HepG2 (cell line): ENCODE measurements at regions of chr3 and their contacts with region 1.

Region 1: DNA sequence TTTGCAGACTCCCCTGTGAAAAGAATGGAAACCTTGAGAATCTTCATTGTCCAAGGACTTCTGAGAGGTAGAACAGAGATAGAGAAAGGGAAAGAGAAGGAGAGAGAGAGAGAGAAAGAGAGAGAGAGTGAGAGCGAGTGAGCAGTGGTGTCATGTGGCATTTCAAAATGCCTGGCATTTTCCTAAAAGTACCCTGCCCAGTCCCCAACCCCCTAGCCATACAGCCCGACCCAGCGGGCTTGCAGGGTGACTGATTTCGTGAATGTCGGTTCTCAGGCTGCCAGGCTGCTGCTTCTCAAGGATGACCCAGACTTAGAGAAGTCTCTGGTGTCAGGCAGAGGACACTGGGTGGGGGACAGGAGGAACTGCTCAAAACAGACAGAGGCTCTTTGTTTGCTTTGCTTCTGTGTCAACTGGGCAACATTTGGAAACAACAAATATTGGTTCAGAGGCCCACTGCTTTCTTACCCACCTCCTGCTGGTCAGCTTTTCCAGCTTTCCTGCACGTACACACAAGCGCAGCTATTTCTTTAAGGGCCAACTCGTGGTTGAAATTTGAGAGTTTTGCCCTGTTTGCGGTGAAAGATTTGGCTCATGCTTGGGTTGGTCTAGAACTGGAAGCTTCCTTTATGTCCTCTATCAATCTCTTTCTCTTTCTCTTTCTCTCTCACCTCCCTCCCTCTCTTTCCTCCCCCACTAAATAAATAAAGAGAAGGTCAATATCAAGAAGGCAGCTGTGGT is 3.7 kb upstream of the TF start:
- DNase-seq: peak; percentile 97
- ATAC-seq: peak; percentile 78
- H3K4me3 ChIP-seq: peak overlapping the region; percentile 29 to 65 (median 48); a peak in 5 of 6 replicates
- H3K27ac ChIP-seq: peak overlapping the region; percentile 90
- H3K4me1 ChIP-seq: peaks cover 55% of the 10 kb centered on the region
- H3K27me3 ChIP-seq: peaks cover 0 to 3% of the 10 kb centered on the region in 2 experiments; a peak in 1 of 5 replicates
- CTCF ChIP-seq: peak; percentile 30
- EP300 ChIP-seq: peak; percentile 87 to 100; a peak in 3 of 4 replicates
- POLR2A ChIP-seq: no peak
- RAD21 ChIP-seq: peak; percentile 80

Region 2: GRCh38 chr3:133670525-133670995 is 72.0 kb before region 1 on chr3:
- CTCF ChIA-PET with region 1: no interaction called
- POLR2A ChIA-PET with region 1: interaction called, 91 read pairs
- in situ Hi-C with region 1: no loop called
- intact Hi-C with region 1: loop called (anchors 1 kb)
- DNase-seq: peak; percentile 98
- ATAC-seq: peak; percentile 91
- H3K4me3 ChIP-seq: peak overlapping the region in 2 of 3 experiments; percentile 5 to 47; a peak in 2 of 6 replicates
- H3K27ac ChIP-seq: peak overlapping the region; percentile 89
- H3K4me1 ChIP-seq: peaks cover 90% of the 10 kb centered on the region
- H3K27me3 ChIP-seq: no peaks in the 10 kb centered on the region
- CTCF ChIP-seq: 0 out of 2 replicates have a peak, but pooled peaks have one; percentile 15
- EP300 ChIP-seq: peak; percentile 78 to 98
- POLR2A ChIP-seq: no peak
- RAD21 ChIP-seq: no peak

Region 3: GRCh38 chr3:133703915-133704314 is 38.6 kb before region 1 on chr3:
- CTCF ChIA-PET with region 1: no interaction called
- POLR2A ChIA-PET with region 1: interaction called, 18 read pairs
- in situ Hi-C with region 1: no loop called
- intact Hi-C with region 1: loop called (anchors 2 kb)
- DNase-seq: peak; percentile 25
- ATAC-seq: peak; percentile 78
- H3K4me3 ChIP-seq: no peak overlapping the region
- H3K27ac ChIP-seq: no peak overlapping the region
- H3K4me1 ChIP-seq: peaks cover 29% of the 10 kb centered on the region
- H3K27me3 ChIP-seq: no peaks in the 10 kb centered on the region
- CTCF ChIP-seq: no peak
- EP300 ChIP-seq: peak in 1 of 2 experiments; percentile 86; a peak in 2 of 4 replicates
- POLR2A ChIP-seq: no peak
- RAD21 ChIP-seq: no peak

Region 4: GRCh38 chr3:133717424-133717823 is 25.1 kb before region 1 on chr3:
- CTCF ChIA-PET with region 1: no interaction called
- POLR2A ChIA-PET with region 1: interaction called, 7 read pairs
- in situ Hi-C with region 1: no loop called
- intact Hi-C with region 1: loop called (anchors 2 kb)
- DNase-seq: peak; percentile 75
- ATAC-seq: peak; percentile 88
- H3K4me3 ChIP-seq: no peak overlapping the region
- H3K27ac ChIP-seq: no peak overlapping the region
- H3K4me1 ChIP-seq: peaks cover 40% of the 10 kb centered on the region
- H3K27me3 ChIP-seq: peaks cover 0 to 4% of the 10 kb centered on the region in 2 experiments; a peak in 1 of 5 replicates
- CTCF ChIP-seq: no peak; the same call in 1 of the 2 replicates
- EP300 ChIP-seq: peak in 1 of 2 experiments; percentile 31; a peak in 1 of 4 replicates
- POLR2A ChIP-seq: no peak
- RAD21 ChIP-seq: no peak